A673 (cell line): ENCODE measurements at regions of chr12 and their contacts with region 1.

Region 1: DNA sequence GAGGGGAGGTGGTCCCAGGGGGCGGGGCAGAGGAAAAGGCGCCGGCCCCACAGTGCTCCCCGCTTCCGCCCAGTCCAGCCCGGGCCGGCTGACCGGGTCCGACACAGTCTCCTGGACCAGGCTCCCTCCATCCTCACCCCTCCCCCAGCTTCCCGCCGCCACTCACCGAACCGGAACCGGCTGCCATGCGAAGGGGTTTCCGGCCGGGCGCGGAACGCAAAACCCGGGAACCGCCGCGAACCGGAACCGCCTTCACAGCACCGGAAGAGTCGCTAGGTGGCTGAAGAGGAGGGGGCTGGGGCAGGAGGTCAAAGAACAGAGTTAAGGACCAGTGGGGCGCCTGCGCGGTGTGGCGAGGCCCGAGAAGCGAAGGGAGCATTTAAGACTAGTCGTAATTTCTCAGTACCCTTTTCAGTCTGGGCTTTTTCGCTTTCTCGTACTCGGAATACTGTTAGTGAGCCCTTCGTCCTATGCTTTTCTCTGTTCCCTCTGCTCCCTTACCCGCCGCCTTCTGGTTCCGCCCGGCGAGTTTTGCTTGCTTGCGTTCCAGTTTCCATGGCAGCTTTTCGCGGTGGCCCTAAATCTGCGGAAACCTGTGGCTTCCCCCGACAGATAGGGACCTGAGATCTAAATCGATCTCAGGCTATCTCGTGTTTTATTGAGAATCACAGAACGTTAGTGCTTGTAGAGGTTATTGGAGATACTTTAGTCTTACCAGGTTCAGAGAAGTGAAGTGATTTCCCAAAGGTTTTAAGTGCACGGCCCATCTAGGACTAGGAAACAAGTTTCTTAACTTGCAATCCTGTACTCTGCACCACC is at the start of gene SENP1:
- DNase-seq: peak; percentile 91
- H3K4me3 ChIP-seq: peak within 1 kb of the TSS; percentile 94
- H3K27ac ChIP-seq: peak within 1 kb of the TSS; percentile 97
- H3K4me1 ChIP-seq: peaks cover 18% of the 10 kb centered on the region
- H3K27me3 ChIP-seq: peaks cover 5% of the 10 kb centered on the region
- CTCF ChIP-seq: peak; percentile 21; the same call in 1 of the 2 replicates
- total RNA-seq, gene SENP1: 39.4 and 41.6 TPM in 2 replicates

Region 2: DNA sequence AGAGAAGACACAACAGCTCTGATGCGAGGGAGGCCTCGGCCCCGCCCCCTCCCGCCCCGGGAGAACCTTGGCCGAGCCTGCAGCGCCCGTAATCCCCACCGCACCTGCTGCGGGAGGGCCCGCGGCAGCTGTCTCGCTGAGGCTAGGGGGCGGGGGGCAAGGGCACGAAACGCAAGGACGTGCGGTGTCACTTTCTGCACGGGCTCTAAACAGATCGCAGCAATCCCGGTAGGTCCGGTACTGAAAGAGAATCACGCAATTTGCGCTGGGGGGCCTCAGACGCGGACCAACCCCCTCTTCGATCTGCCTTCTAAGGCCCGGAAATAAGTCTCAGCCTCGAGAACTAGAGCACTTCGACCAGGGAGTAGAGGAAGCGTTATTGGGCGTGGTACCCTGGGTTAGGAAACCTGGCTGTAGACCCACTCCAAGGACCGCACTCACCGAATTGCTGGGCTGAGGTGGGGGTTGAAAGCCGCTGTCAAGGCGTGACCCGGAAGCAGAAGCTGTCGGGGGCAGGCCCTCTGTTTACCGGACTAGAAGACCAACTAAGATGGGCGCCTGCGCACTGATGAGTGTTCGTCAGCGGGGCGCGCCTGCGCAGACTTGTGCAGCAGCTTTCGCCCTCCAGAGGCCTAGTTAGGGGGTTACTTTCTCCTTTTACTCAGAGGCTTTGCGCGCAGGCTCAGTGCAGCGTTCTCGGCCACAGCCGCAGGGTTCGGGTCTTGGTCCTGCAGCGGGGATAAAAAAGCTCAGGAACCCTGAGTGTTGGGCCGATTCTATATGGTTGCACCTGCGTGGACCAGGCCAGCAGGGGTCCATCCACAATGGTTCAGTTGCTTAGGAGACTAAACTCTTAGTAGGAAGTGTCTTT is 51.2 kb after region 1 on chr12 and contains the start of gene ASB8:
- CTCF ChIA-PET with region 1: no interaction called
- POLR2A ChIA-PET with region 1: no interaction called
- intact Hi-C with region 1: loop called (anchors 5 kb)
- DNase-seq: peak; percentile 98
- H3K4me3 ChIP-seq: peak within 1 kb of the TSS; percentile 74
- H3K27ac ChIP-seq: peak within 1 kb of the TSS; percentile 52
- H3K4me1 ChIP-seq: peaks cover 4% of the 10 kb centered on the region
- H3K27me3 ChIP-seq: no peaks in the 10 kb centered on the region
- CTCF ChIP-seq: peak; percentile 55
- total RNA-seq, gene ASB8: 23.5 and 24.1 TPM in 2 replicates

Region 3: GRCh38 chr12:48296586-48297282 is 190.7 kb after region 1 on chr12:
- CTCF ChIA-PET with region 1: no interaction called
- POLR2A ChIA-PET with region 1: no interaction called
- intact Hi-C with region 1: no loop called
- DNase-seq: peak; percentile 85
- H3K4me3 ChIP-seq: peak overlapping the region; percentile 50
- H3K27ac ChIP-seq: no peak overlapping the region
- H3K4me1 ChIP-seq: no peaks in the 10 kb centered on the region
- H3K27me3 ChIP-seq: no peaks in the 10 kb centered on the region
- CTCF ChIP-seq: no peak